Aorta (tissue), 5 donors: ENCODE measurements at regions of chr16 and their contacts with region 1.

Region 1: DNA sequence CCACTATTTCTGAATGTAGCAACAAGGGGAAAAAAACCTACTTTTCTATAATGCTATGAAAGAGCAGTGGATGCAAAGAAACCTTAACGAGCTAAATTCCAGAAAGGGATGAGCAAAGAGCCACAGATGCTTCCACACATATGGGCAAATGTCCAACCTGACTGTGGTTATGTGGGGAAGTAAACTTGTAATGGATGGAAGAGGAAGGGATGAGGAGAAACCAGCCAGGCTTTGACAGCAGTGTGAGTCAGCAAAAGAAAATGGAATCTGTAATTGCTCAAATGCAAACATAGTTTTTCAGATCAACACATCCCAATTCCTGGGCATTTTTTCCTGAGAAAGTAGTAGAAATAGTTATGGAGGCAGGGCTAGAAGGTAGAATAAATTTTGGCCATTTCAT is 204.8 kb upstream of the CPHXL start:
- DNase-seq: no peak
- ATAC-seq: no peak
- H3K4me3 ChIP-seq: no peak overlapping the region
- H3K27ac ChIP-seq: no peak overlapping the region
- H3K4me1 ChIP-seq: no peaks in the 10 kb centered on the region
- H3K27me3 ChIP-seq: no peaks in the 10 kb centered on the region

Region 2: DNA sequence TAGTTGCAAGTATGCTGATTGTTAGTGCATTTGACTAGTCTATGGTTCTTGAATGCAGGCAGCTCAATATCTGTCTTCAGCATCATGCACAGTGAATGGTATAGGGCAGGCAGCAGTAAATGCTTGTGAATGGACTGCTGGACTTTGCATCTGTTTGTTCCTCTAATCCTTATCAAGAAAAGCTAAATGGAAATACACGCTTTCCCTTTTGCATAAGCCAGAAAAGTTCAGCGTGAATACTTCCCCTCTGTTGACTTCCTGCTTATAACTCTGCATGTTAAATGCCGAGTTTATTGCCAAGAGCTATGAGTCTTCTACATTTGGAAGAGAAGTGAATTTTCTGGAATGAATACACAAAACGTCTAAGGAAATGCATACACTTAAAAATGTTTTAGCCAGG is 76.9 kb before region 1 on chr16:
- intact Hi-C with region 1: no loop called
- DNase-seq: no peak
- ATAC-seq: no peak
- H3K4me3 ChIP-seq: no peak overlapping the region
- H3K27ac ChIP-seq: no peak overlapping the region
- H3K4me1 ChIP-seq: no peaks in the 10 kb centered on the region
- H3K27me3 ChIP-seq: no peaks in the 10 kb centered on the region

Region 3: GRCh38 chr16:75996521-75996920 is 65.5 kb after region 1 on chr16:
- intact Hi-C with region 1: loop called in 1 of 2 experiments (anchors 10 kb)
- DNase-seq: no peak
- ATAC-seq: no peak
- H3K4me3 ChIP-seq: no peak overlapping the region
- H3K27ac ChIP-seq: no peak overlapping the region
- H3K4me1 ChIP-seq: no peaks in the 10 kb centered on the region
- H3K27me3 ChIP-seq: no peaks in the 10 kb centered on the region